ENCODE measurements at regions of chr3 and their contacts with region 1.

Region 1: DNA sequence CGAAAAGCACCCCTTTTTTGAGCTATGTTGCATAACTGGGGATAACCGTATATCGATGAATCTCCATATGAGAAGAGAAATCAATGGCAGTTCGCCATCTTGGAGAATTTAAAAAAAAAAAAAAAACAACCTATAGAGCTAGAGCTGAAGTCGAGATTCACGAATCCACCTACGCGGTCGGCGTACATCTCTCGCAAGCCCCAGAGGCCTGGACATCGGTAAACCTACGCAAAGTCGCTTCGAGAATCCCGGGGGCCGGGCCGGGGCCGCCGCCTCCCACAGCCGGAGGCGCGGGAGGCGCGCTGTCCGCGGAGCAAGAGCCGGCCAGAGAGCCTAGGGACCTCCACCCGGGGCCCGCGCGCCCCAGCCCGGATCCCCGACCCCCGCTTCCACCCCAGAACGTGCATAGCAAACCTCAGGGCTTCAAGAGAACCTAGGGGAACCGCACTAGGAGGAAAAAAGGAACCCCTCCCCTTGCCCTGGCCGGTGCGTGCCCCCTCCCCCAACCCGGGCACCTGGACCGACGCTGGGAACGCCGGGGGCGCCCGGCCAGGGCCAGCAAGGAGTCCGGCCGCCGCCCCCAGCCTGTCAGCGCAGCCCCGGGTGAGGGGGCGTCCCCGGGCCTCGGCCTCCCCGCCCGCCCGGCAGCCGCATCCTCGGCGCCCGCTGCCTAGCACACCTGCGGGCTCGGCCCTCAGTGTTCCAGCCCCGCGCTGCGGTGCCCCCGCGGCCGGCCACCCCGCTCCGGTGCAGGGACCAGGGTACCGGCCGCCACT is 567 bp downstream of the PFN2 start:
- DNase-seq: peak; percentile 80 to 91 (median 84)
- H3K4me3 ChIP-seq: peak overlapping the region; percentile 55 to 95 (median 82)
- H3K27ac ChIP-seq: peak overlapping the region; percentile 63 to 99 (median 94)
- H3K27me3 ChIP-seq: no peaks in the 10 kb centered on the region
- CTCF ChIP-seq: peak in 9 of 56 donors; percentile 8 to 32 (median 14)

Region 2: GRCh38 chr3:149765762-149766334 is 204.3 kb before region 1 on chr3:
- intact Hi-C with region 1: loop called (anchors 2 to 5 kb)
- DNase-seq: no peak
- H3K4me3 ChIP-seq: no peak overlapping the region
- H3K27ac ChIP-seq: peak overlapping the region in 56 of 59 donors; percentile 73 to 99 (median 94)
- H3K27me3 ChIP-seq: no peaks in the 10 kb centered on the region
- CTCF ChIP-seq: peak; percentile 68 to 96 (median 80)

Region 3: DNA sequence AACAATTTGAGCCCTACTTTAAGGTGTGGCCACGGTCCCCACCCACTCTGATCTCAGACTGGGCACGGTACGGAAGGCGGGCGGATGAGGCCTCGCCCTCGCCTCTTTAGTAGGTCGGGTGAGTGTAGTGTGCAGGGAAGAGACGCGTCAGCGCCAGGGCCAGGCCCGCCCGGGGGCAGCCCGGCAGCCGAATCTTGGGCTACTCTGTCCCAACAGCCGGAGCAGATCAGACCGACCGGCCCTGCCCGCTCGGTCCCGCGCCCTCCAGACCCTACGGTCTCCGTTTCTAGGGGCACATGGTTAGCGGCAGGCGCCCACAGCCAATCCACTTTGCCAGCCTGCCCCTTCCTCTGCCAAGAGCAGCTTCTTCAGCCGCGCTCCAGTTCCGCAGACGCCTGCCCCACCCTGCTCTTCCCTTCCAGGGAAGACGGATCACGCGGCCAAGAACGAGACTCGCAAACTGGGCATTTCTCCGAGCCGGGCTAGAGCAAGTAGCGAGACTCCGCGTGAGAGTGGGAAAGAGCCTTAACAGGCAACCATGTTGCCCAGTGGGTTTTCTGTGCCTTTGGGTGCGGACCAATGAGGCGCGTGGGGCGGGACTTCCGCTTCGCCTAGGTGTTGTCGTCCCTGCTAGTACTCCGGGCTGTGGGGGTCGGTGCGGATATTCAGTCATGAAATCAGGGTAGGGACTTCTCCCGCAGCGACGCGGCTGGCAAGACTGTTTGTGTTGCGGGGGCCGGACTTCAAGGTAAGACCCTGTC is 157.3 kb before region 1 on chr3 and contains the start of gene RNF13:
- intact Hi-C with region 1: loop called (anchors 5 kb)
- DNase-seq: peak; percentile 98 to 100 (median 99)
- H3K4me3 ChIP-seq: peak within 1 kb of the TSS; percentile 53 to 96 (median 88)
- H3K27ac ChIP-seq: peak within 1 kb of the TSS; percentile 95 to 100 (median 99)
- H3K27me3 ChIP-seq: no peaks in the 10 kb centered on the region
- CTCF ChIP-seq: peak in 7 of 56 donors; percentile 6 to 38 (median 13)
- total RNA-seq, gene RNF13: 80.2 to 336 (median 136) TPM

Region 4: GRCh38 chr3:149879872-149880271 is 90.3 kb before region 1 on chr3:
- intact Hi-C with region 1: loop called in 1 of 2 experiments (anchors 5 kb)
- DNase-seq: peak in 8 of 10 donors; percentile 24 to 84 (median 65)
- H3K4me3 ChIP-seq: no peak overlapping the region
- H3K27ac ChIP-seq: peak overlapping the region in 9 of 59 donors; percentile 1 to 53 (median 35)
- H3K27me3 ChIP-seq: no peaks in the 10 kb centered on the region
- CTCF ChIP-seq: peak; percentile 36 to 82 (median 64)

Region 5: DNA sequence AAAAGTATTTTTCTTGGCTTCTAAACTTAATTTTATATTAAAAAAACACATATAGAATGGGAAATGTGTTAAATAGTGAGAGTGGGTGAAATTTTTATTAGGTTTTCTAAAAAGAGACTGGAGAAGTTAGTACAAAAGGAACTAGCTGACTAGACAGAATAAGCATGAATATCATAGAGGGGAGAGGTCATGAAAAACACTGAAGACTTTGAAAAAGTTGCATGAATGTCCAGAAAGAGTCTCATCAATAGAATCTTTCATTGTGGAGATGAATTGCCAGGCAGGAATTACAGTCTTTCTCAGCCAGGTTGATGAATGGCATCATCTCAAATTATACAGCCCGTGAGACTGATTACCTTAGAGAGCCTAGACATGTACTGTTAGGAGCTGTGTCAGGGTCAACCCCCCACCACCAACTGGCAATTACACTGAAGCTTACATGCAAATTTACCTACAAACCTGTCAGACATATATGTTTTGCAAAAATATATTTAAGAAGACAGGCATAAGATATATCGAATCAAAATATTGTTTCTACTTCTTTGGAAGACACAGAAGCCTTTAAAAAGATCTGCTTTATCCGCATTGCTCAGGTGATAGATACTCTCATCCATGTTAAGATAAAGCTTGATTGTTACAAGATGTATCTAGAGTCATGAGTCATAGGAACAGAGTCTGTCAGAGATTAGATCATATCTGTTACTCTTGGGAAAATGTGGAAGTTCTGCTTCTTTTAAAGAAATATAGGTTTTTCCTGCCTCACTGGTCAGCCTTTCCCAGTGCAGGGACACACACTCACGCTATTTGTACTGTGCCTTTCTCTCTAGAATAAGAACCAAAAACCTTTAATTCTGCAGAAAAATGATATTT is 35.4 kb after region 1 on chr3:
- intact Hi-C with region 1: no loop called
- DNase-seq: no peak
- H3K4me3 ChIP-seq: no peak overlapping the region
- H3K27ac ChIP-seq: no peak overlapping the region
- H3K27me3 ChIP-seq: no peaks in the 10 kb centered on the region
- CTCF ChIP-seq: no peak

Region 6: GRCh38 chr3:150183678-150184425 is 213.7 kb after region 1 on chr3:
- intact Hi-C with region 1: loop called (anchors 1 to 2 kb)
- DNase-seq: peak; percentile 55 to 82 (median 78)
- H3K4me3 ChIP-seq: peak overlapping the region; percentile 23 to 68 (median 51)
- H3K27ac ChIP-seq: peak overlapping the region in 41 of 59 donors; percentile 5 to 86 (median 53)
- H3K27me3 ChIP-seq: no peaks in the 10 kb centered on the region
- CTCF ChIP-seq: peak; percentile 43 to 94 (median 82)

Region 7: DNA sequence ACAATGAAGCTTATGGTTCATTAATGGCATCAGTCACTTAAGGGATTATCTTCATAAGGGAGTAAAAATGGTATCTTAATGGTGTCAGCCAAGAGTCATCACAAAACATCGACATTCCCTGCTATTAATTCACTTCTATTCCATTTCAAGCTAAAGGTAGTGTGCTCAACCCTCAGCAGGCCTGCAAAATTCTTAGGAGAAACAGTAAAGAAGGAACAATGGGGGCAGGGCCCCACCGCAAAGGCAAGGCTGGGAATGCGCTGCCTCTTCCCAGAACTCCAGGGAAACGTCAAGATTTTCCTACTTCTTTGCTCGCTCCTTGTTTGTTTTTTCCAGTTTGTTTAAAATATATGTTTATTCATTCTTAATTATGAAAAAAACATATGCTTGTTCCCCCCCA is 250.7 kb after region 1 on chr3:
- intact Hi-C with region 1: loop called in 1 of 2 experiments (anchors 2 kb)
- DNase-seq: no peak
- H3K4me3 ChIP-seq: peak overlapping the region in 58 of 59 donors; percentile 5 to 63 (median 43)
- H3K27ac ChIP-seq: peak overlapping the region in 1 of 59 donors; percentile 1
- H3K27me3 ChIP-seq: no peaks in the 10 kb centered on the region
- CTCF ChIP-seq: no peak

Region 8: GRCh38 chr3:150546226-150547044 is 576.3 kb after region 1 on chr3 and contains the starts of genes EIF2A and SERP1:
- intact Hi-C with region 1: loop called in 1 of 2 experiments (anchors 2 kb)
- DNase-seq: peak; percentile 97 to 99 (median 98)
- H3K4me3 ChIP-seq: peak within 1 kb of the TSS; percentile 66 to 99 (median 93)
- H3K27ac ChIP-seq: peak within 1 kb of the TSS; percentile 72 to 99 (median 97)
- H3K27me3 ChIP-seq: no peaks in the 10 kb centered on the region
- CTCF ChIP-seq: peak in 32 of 56 donors; percentile 2 to 49 (median 24)
- total RNA-seq, gene EIF2A: 32.6 to 75.9 (median 53.3) TPM
- total RNA-seq, gene SERP1: 44.6 to 110 (median 64.5) TPM